Dorsolateral prefrontal cortex (tissue), 120 donors: ENCODE measurements at regions of chr10 and their contacts with region 1.

Region 1: DNA sequence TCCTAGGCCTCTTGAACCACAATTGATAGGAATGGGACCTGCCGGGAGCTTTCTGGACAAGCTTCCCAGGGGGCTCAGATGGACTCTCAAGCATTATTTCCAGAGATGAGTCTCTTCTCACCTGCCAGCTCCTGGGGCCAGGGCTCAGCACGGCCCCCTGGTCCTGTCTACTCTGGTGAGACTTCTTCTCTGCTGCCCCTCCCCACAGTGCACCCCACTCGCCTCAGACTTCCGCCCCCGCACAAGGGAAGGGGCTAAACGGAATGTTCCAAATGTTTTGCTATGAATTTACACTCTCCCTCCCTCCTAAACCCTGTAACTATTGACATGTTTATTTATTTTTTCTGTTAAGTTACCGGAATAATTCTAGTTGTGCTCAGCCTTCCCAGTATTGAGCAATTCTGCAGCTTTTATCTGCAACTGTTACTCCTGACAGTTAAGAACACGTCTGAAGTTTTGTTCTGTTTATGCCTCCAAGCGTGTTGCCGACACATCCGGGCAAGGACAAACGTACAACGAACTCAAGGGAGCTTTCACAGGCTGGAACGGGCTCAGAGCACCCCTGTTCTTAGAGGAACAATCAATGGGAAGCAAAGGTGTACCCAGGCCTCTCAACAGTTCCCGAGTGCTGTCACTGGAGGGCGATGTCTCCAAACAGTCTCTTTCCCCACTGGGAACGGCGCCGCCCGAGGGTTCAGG is 55.2 kb downstream of the FHIP2A start:
- DNase-seq: peak; percentile 9 to 80 (median 72)
- H3K4me3 ChIP-seq: peak overlapping the region in 9 of 59 donors; percentile 2 to 39 (median 22)
- H3K27ac ChIP-seq: peak overlapping the region in 2 of 59 donors; percentile 9 to 29
- H3K27me3 ChIP-seq: no peaks in the 10 kb centered on the region
- CTCF ChIP-seq: peak in 55 of 56 donors; percentile 12 to 83 (median 71)

Region 2: GRCh38 chr10:114437456-114438292 is 439.1 kb before region 1 on chr10:
- intact Hi-C with region 1: no loop called
- DNase-seq: no peak
- H3K4me3 ChIP-seq: no peak overlapping the region
- H3K27ac ChIP-seq: no peak overlapping the region
- H3K27me3 ChIP-seq: peaks cover 0 to 24% (median 0%) of the 10 kb centered on the region in 45 donors
- CTCF ChIP-seq: peak in 38 of 56 donors; percentile 10 to 48 (median 28)

Region 3: DNA sequence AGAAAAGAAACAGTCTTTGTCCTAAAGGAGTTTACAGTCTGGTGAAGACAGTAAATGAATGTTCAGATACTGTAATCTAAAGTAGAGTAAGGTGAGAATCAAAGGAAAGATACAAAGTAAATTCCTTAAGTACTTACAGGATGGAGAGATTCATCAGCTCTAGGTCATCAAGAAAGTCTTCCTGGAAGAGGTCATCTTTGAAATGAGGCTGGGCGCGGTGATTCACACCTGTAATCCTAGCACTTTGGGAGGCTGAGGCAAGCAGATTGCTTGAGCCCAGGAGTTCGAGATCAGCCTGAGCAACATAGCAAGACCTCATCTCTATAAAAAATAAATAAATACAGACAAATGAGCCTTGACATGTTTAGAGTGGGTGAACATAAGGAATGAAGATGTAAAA is 36.9 kb before region 1 on chr10:
- intact Hi-C with region 1: no loop called
- DNase-seq: no peak
- H3K4me3 ChIP-seq: no peak overlapping the region
- H3K27ac ChIP-seq: no peak overlapping the region
- H3K27me3 ChIP-seq: no peaks in the 10 kb centered on the region
- CTCF ChIP-seq: no peak

Region 4: GRCh38 chr10:115129752-115130151 is 253.0 kb after region 1 on chr10:
- intact Hi-C with region 1: loop called in 1 of 2 experiments (anchors 2 kb)
- DNase-seq: no peak
- H3K4me3 ChIP-seq: no peak overlapping the region
- H3K27ac ChIP-seq: no peak overlapping the region
- H3K27me3 ChIP-seq: no peaks in the 10 kb centered on the region
- CTCF ChIP-seq: peak; percentile 14 to 83 (median 58)